Left ventricle myocardium inferior (tissue), 1 donor: ENCODE measurements at regions of chr3 and their contacts with region 1.

Region 1: DNA sequence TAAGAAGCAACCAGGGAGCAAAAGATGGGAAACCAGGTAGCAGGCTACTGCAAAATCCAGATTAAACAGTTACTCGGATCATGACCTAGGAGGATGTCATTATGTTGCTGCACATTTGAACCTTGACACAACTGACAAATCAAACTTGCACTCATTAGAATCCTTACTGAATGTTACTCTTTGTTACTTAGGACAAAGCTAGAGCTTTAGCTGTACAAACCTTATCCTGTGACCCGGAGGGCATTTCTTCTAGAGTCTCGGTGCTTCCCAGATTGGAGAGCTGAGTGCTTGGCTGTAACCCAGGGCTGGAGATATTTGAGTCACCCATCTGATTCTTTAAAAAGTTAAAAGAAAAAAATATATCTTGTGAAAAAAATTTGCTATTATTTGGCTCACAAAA is 43.4 kb downstream of the DCP1A start:
- DNase-seq: no peak
- H3K4me3 ChIP-seq: no peak overlapping the region
- H3K27ac ChIP-seq: peak overlapping the region; percentile 82
- H3K4me1 ChIP-seq: peaks cover 34% of the 10 kb centered on the region
- H3K27me3 ChIP-seq: no peaks in the 10 kb centered on the region
- CTCF ChIP-seq: no peak

Region 2: GRCh38 chr3:53709860-53710674 is 406.1 kb after region 1 on chr3:
- intact Hi-C with region 1: loop called (anchors 10 kb)
- DNase-seq: peak; percentile 68
- H3K4me3 ChIP-seq: no peak overlapping the region
- H3K27ac ChIP-seq: peak overlapping the region; percentile 85
- H3K4me1 ChIP-seq: peaks cover 80% of the 10 kb centered on the region
- H3K27me3 ChIP-seq: no peaks in the 10 kb centered on the region
- CTCF ChIP-seq: peak; percentile 83